Posterior cingulate gyrus (tissue), 11 donors: ENCODE measurements at regions of chr3 and their contacts with region 1.

Region 1: DNA sequence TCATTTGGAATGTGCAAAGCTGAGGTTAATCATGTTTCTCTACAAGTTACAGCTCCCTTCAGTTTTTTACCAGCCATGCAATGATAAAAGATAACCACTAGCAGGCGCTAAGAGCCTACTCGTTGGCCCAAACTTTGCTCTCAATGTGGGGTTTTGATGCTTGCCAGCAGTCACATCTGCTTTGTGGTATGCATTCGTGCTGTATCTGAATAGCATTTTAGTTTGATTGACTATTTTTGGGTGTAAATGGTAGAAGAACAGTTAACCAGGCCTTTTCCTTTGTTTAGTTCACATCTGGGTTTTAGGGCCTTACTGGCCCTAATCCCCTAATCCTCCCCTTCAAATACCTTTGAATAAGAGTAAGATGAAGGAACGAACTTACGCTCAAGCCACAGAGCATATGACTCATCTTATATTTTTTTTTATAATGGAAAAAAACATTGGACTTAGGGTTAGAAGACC is 4.4 kb upstream of the CLDN11 start:
- DNase-seq: peak in 4 of 10 donors; percentile 40 to 88 (median 46)

Region 2: GRCh38 chr3:169552533-169552932 is 861.7 kb before region 1 on chr3:
- intact Hi-C with region 1: no loop called
- DNase-seq: no peak

Region 3: GRCh38 chr3:170180908-170181879 is 233.0 kb before region 1 on chr3 and contains the start of gene PHC3:
- intact Hi-C with region 1: loop called (anchors 10 kb)
- DNase-seq: peak; percentile 89 to 99 (median 92)

Region 4: DNA sequence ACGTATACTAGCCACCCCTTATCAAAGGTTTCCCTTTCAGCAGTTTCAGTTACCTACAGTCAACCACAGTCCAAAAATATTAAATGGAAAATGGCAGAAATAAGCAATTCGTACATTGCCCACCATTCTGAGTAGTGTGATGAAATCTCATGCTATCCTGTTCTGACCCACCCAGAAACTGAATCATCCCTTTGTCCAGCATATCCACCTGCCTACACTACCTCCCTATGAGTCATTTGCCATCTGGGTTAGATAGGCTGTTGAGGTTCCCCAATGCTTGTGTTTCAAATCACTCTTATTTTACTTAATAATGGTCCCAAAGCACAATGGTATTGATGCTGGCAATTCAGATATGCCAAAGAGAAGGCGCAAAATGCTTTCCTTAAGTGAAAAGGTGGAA is 217.4 kb before region 1 on chr3:
- intact Hi-C with region 1: no loop called
- DNase-seq: no peak

Region 5: DNA sequence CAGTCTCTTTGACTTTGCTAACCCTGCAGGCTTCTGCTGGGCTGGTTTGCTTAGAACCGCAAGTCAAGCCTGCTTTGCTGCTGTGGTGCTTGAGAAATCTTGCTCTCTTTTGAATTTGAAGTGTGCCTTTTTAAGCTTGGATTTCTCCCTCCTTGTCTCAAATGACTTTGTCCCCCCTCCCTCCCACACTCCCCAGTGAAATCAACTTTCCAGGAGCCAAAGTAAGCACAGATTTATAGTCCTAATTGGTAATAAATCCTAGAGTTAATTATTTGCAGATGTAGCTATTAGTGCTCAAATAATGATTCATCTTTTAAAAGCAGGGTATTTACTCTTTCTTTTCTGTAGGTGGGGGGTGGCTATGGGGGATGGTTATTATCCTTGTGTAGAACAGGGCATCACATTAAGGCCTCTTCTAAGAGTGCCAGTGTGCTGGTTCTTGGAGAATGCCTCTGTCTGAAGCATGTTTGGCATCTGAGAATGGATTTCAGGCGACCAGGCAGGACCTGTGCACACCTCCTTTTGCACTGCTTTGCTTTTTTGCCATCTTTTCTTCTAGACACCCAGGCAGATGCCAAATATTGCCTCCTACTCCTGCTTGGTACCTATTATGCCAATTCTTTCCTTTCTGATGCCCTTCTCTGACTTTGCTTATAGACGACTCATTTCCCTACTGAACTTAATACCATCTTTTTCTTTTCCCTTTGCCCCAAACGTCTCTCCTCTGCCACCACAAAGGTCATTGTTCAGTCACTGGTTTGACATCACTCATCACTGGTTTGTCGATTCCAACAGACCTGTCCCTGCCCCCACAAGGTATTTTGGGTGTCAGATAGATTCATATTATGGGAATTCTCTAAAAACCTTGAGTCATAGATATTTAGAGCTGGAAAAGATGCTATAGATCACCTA is 55.2 kb after region 1 on chr3:
- intact Hi-C with region 1: loop called (anchors 5 kb)
- DNase-seq: no peak

Region 6: DNA sequence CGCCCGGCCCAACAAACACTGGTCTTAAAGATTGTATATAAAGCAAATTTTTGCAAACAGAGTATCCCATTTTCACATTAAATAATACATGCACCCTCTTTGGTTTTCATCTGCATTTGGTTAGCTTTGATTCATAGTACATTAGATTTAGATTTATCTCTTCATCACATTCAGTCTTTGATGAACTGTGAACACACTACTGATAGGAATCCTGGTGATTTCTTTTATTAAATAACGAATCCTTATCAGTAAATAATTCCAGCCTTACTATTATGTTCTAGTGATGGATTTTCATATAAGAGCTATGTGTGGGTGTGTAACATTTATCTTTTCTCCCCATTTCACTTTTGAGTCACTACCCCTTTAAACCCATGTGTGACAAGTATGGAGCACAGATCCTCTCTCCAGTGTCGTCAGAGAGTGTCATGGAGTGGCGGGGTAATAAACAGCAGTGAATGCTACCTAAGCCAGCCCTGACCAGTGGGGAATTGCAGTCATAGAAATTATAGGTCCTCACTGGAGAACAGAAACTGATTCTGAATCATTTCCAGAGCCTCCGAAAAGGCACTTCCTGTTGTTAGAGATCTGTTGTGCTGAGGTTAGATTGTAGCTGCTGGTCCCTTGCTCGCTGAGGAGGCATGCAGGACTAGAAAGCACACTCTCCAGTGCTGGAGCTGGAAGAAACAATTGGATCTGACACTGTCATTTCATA is 149.6 kb after region 1 on chr3:
- intact Hi-C with region 1: no loop called
- DNase-seq: no peak

Region 7: DNA sequence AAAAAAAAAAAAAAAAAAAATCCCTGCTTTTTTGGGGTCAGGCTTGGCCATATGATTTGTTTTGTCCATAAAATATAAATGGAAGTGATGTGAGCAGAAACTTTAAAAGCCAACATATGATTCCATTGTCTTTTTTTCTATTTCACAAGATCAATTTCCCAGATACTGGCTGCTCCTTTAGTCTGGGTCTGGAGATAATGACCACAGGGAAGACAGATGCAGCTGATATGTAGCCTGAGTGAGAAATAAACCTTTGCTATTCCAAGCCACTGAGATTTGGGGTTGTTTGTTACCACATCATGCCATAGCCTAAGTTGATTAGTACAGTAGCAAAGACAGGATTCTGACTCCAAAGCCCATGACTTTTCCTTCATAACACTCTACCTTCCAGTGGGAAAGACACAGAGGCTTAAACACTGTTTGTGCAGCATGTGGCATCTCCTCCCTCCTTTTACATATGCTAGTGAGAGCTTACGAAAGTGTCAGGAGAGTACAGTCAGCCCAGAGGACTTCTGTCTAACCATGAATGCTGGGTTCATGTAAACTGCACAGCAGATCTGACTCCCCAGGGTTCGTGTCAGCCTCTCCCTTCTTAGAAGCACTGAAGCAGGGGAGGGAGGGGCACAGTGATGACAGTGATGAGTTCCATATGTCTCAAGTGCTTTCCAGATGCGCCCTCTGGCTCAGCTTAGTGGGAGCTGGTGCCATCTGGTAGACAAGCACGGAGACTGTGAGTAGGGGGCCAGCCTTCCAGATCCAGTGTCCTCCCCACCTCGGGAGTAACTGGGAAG is 208.3 kb after region 1 on chr3:
- intact Hi-C with region 1: loop called (anchors 10 kb)
- DNase-seq: peak in 6 of 10 donors; percentile 28 to 86 (median 58)

Region 8: DNA sequence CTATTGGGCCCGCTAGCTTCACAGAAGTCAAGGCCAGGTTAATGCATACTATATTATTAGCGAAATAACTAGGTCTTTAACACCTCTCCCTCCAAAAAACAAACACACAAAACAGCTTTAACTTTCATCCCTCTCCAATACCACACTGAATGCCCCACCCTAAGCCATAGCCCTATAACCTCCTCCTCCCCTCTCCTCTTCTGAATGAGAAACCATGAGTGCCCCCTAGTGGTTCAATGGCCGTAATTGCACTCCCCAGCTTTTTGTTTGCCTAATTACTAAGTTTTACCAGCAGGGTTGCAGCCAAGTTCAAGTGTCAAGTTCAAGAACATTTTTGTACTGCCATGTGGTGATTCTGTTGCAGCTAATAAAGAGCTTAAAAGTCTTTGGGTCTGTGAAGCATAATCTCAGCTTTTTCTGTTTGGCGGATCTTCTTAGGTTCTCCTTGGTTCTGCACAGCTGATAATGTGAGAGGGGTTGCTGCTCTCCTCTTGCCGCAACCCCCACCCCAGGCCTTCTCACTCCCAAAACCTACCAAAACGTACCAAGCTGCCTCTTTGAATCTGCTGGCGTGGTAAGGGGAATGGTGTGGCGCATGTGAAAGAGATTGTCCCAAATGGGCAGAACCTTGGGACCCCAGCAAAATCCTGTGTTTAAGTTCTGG is 397.8 kb after region 1 on chr3:
- intact Hi-C with region 1: loop called (anchors 1 kb)
- DNase-seq: peak in 8 of 10 donors; percentile 24 to 90 (median 71)